Vagina (tissue), 2 donors: ENCODE measurements at regions of chr3 and their contacts with region 1.

Region 1: DNA sequence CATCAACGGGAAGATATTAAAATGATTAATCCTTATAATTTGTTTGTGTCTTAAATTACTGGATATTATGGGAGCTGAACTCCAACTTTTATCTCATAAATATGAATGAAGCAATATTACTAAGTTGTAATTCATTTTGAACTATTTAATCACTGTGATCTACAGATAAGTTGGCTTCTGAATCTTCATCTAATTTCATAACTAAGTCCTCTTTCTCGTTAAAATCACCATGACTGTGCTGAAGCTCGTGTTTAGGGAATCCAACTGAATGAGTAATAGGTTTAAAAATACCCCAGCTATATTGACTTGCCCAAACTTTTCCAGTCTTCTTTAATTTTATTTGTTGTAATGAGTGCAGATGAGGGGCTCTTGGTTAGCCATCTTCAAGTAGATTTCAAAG is 14.1 kb downstream of the MDFIC2 start:
- DNase-seq: no peak
- H3K4me3 ChIP-seq: no peak overlapping the region
- H3K27ac ChIP-seq: no peak overlapping the region
- H3K4me1 ChIP-seq: no peaks in the 10 kb centered on the region
- H3K27me3 ChIP-seq: no peaks in the 10 kb centered on the region
- CTCF ChIP-seq: no peak
- POLR2A ChIP-seq: no peak

Region 2: DNA sequence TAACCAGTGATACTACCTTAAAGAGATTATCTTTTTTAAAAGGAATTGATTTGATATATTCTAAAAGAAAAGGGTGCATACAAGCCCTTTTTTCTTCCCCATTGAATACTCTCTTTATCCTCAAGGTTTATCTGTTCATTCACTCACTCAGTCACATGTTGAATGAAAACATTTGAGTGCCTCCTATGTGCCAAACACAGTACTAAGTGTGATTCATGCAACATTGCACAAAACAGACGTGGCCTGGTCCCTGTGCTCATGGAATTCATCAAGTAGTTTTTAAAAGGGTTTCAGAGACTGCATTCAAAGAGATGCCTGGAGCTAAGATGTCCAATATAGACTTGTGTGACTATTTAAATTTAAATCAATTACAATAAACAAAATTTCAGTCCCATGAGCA is 476.3 kb after region 1 on chr3:
- intact Hi-C with region 1: no loop called
- DNase-seq: no peak
- H3K4me3 ChIP-seq: no peak overlapping the region
- H3K27ac ChIP-seq: no peak overlapping the region
- H3K4me1 ChIP-seq: no peaks in the 10 kb centered on the region
- H3K27me3 ChIP-seq: no peaks in the 10 kb centered on the region
- CTCF ChIP-seq: no peak
- POLR2A ChIP-seq: no peak

Region 3: DNA sequence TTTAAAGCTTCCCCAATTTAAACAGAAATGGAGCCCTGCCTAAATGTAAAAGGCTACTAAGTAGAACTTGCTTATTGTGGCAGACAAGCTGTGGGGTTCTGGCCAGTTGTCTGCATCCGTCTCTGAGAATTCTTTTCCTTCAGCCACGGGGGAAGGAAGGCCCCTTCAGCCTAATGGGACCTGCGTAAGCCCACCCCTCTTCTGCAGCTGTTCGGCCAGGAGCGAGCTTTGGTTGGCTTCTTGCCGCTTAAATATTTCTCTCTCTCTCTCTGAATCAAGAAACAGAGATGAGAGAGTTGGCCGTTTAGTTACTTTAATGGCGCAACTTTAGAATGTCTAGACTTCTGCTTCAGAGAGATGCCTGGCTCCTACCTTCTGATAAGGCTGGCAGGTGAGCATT is 1638.3 kb after region 1 on chr3:
- intact Hi-C with region 1: loop called (anchors 5 kb)
- DNase-seq: no peak
- H3K4me3 ChIP-seq: no peak overlapping the region
- H3K27ac ChIP-seq: no peak overlapping the region
- H3K4me1 ChIP-seq: no peaks in the 10 kb centered on the region
- H3K27me3 ChIP-seq: no peaks in the 10 kb centered on the region
- CTCF ChIP-seq: no peak
- POLR2A ChIP-seq: no peak